Activated T-helper 2 cell treated with anti-CD3 and anti-CD28 coated beads, Interferon-gamma antibody, Interleukin-2, Interleukin-4, amounts not matched to agents 10 μg/mL and 5 μg/mL and 100 μg/mL, durations not matched to agents 14 hours and 24 hours and 36 hours (primary cell): ENCODE measurements at regions of chr12 and their contacts with region 1.

Region 1: GRCh38 chr12:76621582-76622024 is 62.0 kb upstream of the OSBPL8 start:
- DNase-seq: peak; percentile 40
- H3K4me3 Mint-ChIP-seq: no peak overlapping the region
- H3K27ac Mint-ChIP-seq: no peak overlapping the region
- H3K4me1 Mint-ChIP-seq: peaks cover 4% of the 10 kb centered on the region
- H3K27me3 Mint-ChIP-seq: peaks cover 8% of the 10 kb centered on the region

Region 2: GRCh38 chr12:76583301-76583700 is 38.3 kb before region 1 on chr12:
- intact Hi-C with region 1: no loop called
- DNase-seq: no peak
- H3K4me3 Mint-ChIP-seq: no peak overlapping the region
- H3K27ac Mint-ChIP-seq: no peak overlapping the region
- H3K4me1 Mint-ChIP-seq: peaks cover 4% of the 10 kb centered on the region
- H3K27me3 Mint-ChIP-seq: no peaks in the 10 kb centered on the region

Region 3: DNA sequence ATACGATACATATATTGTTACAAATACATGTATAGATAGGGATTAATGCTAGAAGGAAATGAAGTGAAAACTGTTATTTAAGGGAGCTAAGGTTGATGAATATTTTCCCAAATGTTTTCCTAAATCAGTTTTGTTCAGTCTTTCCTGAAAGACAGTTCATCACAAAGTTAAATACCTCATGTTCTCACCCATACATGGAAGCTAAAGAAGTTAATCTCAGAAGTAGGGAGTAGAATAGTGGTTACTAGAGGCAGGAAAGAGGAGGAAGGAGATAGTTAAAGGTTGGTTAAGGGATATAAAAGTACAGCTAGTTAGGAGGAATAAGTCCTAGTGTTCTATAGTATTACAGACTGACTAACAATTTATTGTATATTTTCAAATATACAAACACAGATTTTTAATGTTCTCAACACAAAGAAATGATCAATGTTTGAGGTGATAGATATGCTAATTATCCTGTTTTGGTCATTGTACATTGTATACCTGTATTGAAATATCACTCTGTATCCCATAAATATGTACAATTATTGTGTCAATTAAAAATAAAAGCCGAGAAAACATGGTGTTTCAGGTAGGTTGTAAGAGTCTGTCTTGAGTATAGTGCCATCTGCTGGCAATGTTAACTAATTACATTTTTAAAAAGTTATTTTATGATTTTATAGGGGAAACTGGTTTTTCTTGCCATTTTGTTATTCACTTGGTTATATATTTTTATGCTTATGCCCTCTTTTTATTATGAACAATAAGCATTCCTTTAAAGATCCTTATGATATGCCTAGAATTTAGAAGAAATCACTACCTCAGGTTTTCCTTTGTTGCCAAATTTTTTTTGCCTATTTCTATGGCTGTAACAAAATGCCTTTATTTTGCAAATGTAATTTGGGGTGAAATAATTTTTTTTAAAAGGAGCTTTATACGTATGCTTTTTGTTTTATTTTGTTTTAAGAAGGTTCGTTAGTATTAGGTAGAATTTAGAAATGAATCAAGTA is 169.3 kb after region 1 on chr12:
- intact Hi-C with region 1: loop called (anchors 1 kb)
- DNase-seq: no peak
- H3K4me3 Mint-ChIP-seq: no peak overlapping the region
- H3K27ac Mint-ChIP-seq: no peak overlapping the region
- H3K4me1 Mint-ChIP-seq: peaks cover 5% of the 10 kb centered on the region
- H3K27me3 Mint-ChIP-seq: no peaks in the 10 kb centered on the region

Region 4: GRCh38 chr12:76927170-76927784 is 305.7 kb after region 1 on chr12:
- intact Hi-C with region 1: loop called (anchors 1 kb)
- DNase-seq: no peak
- H3K4me3 Mint-ChIP-seq: no peak overlapping the region
- H3K27ac Mint-ChIP-seq: no peak overlapping the region
- H3K4me1 Mint-ChIP-seq: no peaks in the 10 kb centered on the region
- H3K27me3 Mint-ChIP-seq: peaks cover 2% of the 10 kb centered on the region

Region 5: GRCh38 chr12:77010691-77011548 is 389.3 kb after region 1 on chr12:
- intact Hi-C with region 1: loop called (anchors 1 kb)
- DNase-seq: peak; percentile 45
- H3K4me3 Mint-ChIP-seq: no peak overlapping the region
- H3K27ac Mint-ChIP-seq: no peak overlapping the region
- H3K4me1 Mint-ChIP-seq: peaks cover 3% of the 10 kb centered on the region
- H3K27me3 Mint-ChIP-seq: peaks cover 13% of the 10 kb centered on the region